Activated B cell treated with CpG ODN at 0.5 μM for 24 hours (primary cell): ENCODE measurements at regions of chr5 and their contacts with region 1.

Region 1: GRCh38 chr5:14286574-14287421 is 143.7 kb downstream of the TRIO start:
- DNase-seq: peak; percentile 26
- ATAC-seq: peak; percentile 98
- H3K4me3 Mint-ChIP-seq: peak overlapping the region; percentile 54
- H3K27ac Mint-ChIP-seq: peak overlapping the region; percentile 77
- H3K4me1 Mint-ChIP-seq: peaks cover 35% of the 10 kb centered on the region
- H3K27me3 Mint-ChIP-seq: no peaks in the 10 kb centered on the region
- CTCF ChIP-seq: no peak

Region 2: DNA sequence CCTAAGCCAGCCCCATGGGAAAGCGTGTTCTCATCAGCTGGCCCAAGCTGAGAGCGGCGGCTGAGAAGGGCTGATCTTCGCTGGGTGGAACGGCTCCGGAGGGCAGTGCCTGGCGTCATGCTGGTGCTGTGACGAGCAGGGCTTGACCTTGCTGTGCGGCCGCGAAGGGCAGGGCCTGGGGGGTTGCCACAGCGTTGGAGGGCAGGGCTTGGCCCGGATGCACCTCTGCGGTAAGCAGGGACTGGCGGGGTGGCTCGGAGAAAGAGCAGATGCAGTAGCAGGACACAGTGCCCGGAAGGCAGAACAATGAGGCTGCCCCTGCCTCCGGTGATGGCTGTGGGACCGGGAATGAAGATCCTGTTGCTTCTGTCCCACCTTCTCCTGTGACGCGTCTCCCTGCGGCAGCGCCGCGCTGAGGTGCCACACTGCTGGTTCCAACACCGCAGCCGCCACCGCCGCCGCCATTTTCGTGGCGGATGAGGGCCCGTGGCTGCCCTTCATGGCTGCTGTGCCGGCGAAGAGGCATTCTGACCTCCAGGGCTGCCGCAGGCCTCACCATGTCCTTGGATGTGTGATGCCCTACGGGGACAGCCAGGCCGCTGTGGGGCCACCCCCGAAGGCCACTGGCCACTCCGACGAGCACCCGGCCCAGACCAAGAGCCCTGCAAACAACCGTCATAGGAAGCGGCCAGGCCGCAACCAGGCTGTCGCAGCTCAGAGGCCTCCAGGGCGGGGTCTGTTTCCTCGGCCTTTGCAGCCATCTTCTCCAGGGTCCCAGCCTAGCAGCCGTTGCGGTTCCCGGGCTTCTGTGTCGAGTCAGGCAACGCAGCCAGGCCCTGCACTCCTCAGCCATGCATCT is 1492.1 kb before region 1 on chr5:
- CTCF ChIA-PET with region 1: no interaction called
- POLR2A ChIA-PET with region 1: no interaction called
- intact Hi-C with region 1: no loop called
- DNase-seq: peak; percentile 9
- ATAC-seq: no peak
- H3K4me3 Mint-ChIP-seq: no peak overlapping the region
- H3K27ac Mint-ChIP-seq: no peak overlapping the region
- H3K4me1 Mint-ChIP-seq: no peaks in the 10 kb centered on the region
- H3K27me3 Mint-ChIP-seq: no peaks in the 10 kb centered on the region
- CTCF ChIP-seq: no peak

Region 3: GRCh38 chr5:14331386-14331781 is 44.6 kb after region 1 on chr5:
- CTCF ChIA-PET with region 1: no interaction called
- POLR2A ChIA-PET with region 1: interaction called, 3 read pairs
- intact Hi-C with region 1: loop called (anchors 2 kb)
- DNase-seq: no peak
- ATAC-seq: peak; percentile 92
- H3K4me3 Mint-ChIP-seq: peak overlapping the region; percentile 74
- H3K27ac Mint-ChIP-seq: peak overlapping the region; percentile 89
- H3K4me1 Mint-ChIP-seq: peaks cover 57% of the 10 kb centered on the region
- H3K27me3 Mint-ChIP-seq: no peaks in the 10 kb centered on the region
- CTCF ChIP-seq: no peak